Activated T-helper 2 cell treated with anti-CD3 and anti-CD28 coated beads, Interferon-gamma antibody, Interleukin-2, Interleukin-4, amounts not matched to agents 10 μg/mL and 5 μg/mL and 100 μg/mL, durations not matched to agents 14 hours and 24 hours and 36 hours (primary cell): ENCODE measurements at regions of chr19 and their contacts with region 1.

Region 1: DNA sequence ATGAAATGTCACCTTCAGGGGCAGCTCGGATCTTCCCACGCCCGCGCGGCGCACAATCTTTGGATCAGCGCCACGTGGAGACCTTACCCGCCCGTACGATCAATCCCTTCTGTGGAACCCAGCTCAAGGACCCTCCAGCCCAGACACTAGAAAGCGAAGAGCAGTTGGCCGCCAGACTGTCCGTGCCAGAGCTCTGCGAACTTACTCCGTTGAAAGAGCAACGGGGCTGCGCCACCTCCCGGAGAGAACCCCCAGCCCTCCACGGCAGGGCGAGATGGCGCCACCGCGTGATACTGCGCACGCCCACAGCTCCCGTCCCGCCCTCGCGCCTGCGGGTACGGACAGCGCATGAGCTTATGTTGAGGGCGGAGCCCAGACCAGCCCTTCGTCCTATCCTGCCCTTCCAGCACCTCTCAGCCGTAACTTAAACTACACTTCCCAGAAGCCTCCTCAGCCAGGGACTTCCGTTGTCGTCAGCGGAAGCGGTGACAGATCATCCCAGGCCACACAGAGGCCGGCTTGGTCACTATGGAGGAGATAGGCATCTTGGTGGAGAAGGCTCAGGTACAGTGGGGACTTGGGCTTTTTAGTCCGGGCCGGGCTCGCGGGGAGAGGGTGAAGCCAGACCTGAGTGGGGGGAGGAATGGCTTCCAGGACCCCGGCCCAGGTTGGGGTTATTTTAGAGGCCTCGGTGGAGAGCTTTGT is at the start of gene PSMC4:
- DNase-seq: peak; percentile 99
- H3K4me3 Mint-ChIP-seq: peak within 1 kb of the TSS; percentile 92
- H3K27ac Mint-ChIP-seq: peak within 1 kb of the TSS; percentile 96
- H3K4me1 Mint-ChIP-seq: peaks cover 42% of the 10 kb centered on the region
- H3K27me3 Mint-ChIP-seq: no peaks in the 10 kb centered on the region
- total RNA-seq, gene PSMC4: 169 and 174 TPM in 2 replicates

Region 2: DNA sequence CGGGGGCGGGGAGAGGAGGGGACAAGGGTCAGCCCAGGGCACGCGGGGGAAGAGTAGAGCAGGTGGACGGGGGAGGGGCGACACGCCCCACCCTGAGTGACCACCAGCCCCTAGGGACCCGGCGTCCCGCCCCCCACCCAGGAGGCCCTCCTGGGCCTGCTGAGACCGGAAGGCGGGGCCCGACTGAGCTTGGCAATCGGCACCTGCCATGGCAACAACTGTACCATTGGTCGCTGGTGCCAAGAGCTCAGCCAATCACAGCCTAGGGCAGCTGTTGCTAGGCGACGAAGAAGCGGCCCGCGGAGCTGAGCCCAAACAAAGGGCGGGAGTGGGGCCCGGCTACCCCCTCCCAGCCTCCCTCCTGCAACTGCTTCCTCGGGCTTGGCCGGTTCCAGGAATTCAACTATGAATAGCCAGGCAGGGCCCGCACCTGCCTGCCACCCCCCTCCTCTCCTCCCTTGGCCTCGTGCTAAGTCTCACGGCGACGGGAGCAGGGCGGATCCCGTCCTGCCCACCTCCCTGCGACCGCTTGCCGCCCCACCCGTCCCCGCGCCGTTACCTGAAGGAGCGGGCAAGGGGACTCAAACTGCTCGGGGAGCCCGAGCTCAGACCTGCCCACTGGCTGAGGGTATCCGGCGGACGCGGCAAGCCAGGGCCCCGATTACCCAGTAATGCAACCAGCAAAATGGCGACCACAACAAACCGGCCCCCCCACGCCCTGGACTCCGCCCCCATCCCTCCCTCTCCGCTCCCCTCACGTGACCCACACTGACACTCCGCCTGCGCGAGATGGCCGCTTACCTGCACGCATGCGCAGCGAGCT is 137.2 kb before region 1 on chr19 and contains the start of gene DYRK1B:
- intact Hi-C with region 1: loop called (anchors 5 kb)
- DNase-seq: peak; percentile 95
- H3K4me3 Mint-ChIP-seq: peak within 1 kb of the TSS; percentile 76
- H3K27ac Mint-ChIP-seq: peak within 1 kb of the TSS; percentile 76
- H3K4me1 Mint-ChIP-seq: peaks cover 23% of the 10 kb centered on the region
- H3K27me3 Mint-ChIP-seq: no peaks in the 10 kb centered on the region
- total RNA-seq, gene DYRK1B: 6.7 and 7.3 TPM in 2 replicates

Region 3: DNA sequence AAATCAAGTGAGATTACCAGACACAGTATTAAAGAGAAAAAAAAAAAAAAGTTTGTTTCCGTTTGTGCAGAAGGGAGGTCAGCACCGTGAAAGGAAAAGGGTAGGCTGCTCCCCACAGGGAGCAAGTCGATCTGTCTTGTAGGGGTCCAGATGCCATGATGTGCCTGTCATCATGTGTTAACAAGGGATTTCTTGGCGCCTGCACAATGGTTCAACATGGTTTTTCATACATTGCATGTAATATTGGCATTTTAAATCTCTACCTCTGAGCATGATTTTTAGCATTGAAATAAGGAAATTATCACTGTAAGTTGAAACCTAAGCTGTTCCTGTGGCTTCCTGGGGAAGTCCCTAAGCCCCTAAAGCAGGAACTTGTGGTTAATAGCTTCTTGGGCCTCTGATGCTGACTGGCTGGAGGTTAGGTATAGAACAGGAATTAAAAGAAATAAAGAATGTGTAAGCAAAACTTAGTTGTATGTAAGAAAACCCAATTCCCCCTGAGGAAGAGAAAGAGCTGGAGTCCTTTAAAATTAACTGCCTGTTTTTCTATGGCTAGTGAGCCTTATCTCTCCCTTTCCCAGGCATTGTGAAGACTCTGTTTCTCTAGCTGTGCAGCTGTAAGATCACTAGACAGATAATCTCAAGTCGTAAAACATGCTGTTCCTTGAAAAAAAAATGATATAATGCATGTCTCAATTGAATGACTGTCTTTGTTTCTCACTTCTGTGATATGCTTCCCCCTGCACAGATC is 29.0 kb before region 1 on chr19:
- intact Hi-C with region 1: loop called (anchors 1 kb)
- DNase-seq: peak; percentile 54
- H3K4me3 Mint-ChIP-seq: peak overlapping the region; percentile 64
- H3K27ac Mint-ChIP-seq: peak overlapping the region; percentile 82
- H3K4me1 Mint-ChIP-seq: peaks cover 62% of the 10 kb centered on the region
- H3K27me3 Mint-ChIP-seq: no peaks in the 10 kb centered on the region

Region 4: DNA sequence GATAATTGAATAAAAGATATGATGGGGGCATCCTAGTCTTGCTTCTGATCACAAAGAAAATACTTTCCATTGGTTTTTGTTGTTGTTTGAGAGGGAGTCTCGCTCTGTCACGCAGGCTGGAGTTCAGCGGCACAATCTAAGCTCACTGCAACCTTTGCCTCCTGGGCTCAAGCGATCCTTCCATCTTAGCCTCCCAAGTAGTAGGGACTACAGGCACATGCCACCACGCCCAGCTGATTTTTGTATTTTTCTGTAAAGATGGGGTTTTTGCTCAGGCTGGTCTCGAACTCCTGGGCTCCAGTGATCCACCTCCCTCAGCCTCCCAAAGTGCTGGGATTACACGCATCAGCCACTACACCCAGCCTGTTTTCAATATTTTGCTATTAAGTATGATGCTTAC is 16.9 kb before region 1 on chr19:
- intact Hi-C with region 1: no loop called
- DNase-seq: no peak
- H3K4me3 Mint-ChIP-seq: no peak overlapping the region
- H3K27ac Mint-ChIP-seq: peak overlapping the region; percentile 86
- H3K4me1 Mint-ChIP-seq: peaks cover 44% of the 10 kb centered on the region
- H3K27me3 Mint-ChIP-seq: no peaks in the 10 kb centered on the region

Region 5: DNA sequence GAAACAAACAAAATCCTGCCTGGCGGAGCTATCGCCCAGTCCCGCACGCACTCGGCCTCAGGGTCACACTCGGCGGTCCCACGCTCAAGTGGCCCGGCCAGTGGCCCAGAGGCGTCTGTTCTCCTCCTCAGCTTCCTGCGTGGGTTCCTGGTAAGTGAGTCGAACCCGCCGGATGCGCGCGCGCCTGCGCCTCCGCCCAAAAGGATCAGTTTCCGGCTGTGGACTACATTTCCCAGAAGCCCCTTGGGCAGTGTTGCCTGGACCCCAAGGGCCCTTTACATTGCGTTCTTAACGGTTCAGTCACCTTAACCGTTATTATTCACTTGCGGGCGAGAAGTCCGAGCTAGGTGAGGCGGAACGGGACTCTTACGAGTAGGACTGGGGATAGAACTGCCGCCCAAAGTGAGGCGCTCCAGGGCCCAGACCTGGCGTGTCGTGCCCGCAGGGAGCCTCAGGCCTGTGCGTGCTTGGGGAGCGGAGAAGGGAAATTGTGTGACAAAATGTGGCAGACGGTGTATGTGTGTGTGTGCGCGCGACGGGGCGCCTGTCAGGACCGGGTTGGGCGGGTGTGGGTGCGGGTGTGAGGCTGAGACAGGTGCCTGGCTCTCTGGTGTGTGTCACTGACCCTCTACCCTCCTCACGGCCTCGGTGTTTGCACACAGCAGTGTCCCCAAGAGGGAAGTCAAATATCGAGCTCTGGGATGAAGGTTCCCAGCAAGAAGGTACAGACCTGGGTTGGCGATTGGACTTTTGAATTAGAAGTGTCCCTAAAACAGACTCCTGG is 26.2 kb after region 1 on chr19 and contains the start of gene ZNF546:
- intact Hi-C with region 1: loop called (anchors 1 kb)
- DNase-seq: peak; percentile 89
- H3K4me3 Mint-ChIP-seq: peak within 1 kb of the TSS; percentile 98
- H3K27ac Mint-ChIP-seq: peak within 1 kb of the TSS; percentile 96
- H3K4me1 Mint-ChIP-seq: peaks cover 28% of the 10 kb centered on the region
- H3K27me3 Mint-ChIP-seq: no peaks in the 10 kb centered on the region
- total RNA-seq, gene ZNF546: 4.6 and 5.2 TPM in 2 replicates